ENCODE measurements at regions of chr16 and their contacts with region 1.

Region 1: GRCh38 chr16:29702269-29702668 is 23.3 kb downstream of the QPRT start:
- DNase-seq: no peak
- H3K4me3 ChIP-seq: no peak overlapping the region
- H3K27ac ChIP-seq: no peak overlapping the region
- H3K4me1 ChIP-seq: peaks cover 4% of the 10 kb centered on the region
- H3K27me3 ChIP-seq: no peaks in the 10 kb centered on the region
- CTCF ChIP-seq: no peak
- POLR2A ChIP-seq: no peak

Region 2: GRCh38 chr16:29726845-29727377 is 24.6 kb after region 1 on chr16:
- intact Hi-C with region 1: loop called (anchors 2 kb)
- DNase-seq: no peak
- H3K4me3 ChIP-seq: no peak overlapping the region
- H3K27ac ChIP-seq: no peak overlapping the region
- H3K4me1 ChIP-seq: no peaks in the 10 kb centered on the region
- H3K27me3 ChIP-seq: no peaks in the 10 kb centered on the region
- CTCF ChIP-seq: no peak
- POLR2A ChIP-seq: no peak

Region 3: GRCh38 chr16:29765167-29766032 is 63.1 kb after region 1 on chr16:
- intact Hi-C with region 1: no loop called
- DNase-seq: no peak
- H3K4me3 ChIP-seq: no peak overlapping the region
- H3K27ac ChIP-seq: no peak overlapping the region
- H3K4me1 ChIP-seq: no peaks in the 10 kb centered on the region
- H3K27me3 ChIP-seq: no peaks in the 10 kb centered on the region
- CTCF ChIP-seq: no peak
- POLR2A ChIP-seq: no peak